CD8-positive, alpha-beta T cell (primary cell): ENCODE measurements at regions of chr12 and their contacts with region 1.

Region 1: GRCh38 chr12:132687208-132688164 is at the starts of genes POLE and PXMP2:
- DNase-seq: peak; percentile 88 to 98 (median 94)
- ATAC-seq: peak; percentile 95
- H3K4me3 ChIP-seq: peak within 1 kb of the TSS; percentile 38 to 58
- H3K4me3 Mint-ChIP-seq: peak within 1 kb of the TSS; percentile 82
- H3K27ac ChIP-seq: peak within 1 kb of the TSS in 1 of 2 experiments; percentile 27
- H3K27ac Mint-ChIP-seq: peak within 1 kb of the TSS; percentile 55
- H3K4me1 ChIP-seq: peaks cover 7% of the 10 kb centered on the region
- H3K4me1 Mint-ChIP-seq: peaks cover 14% of the 10 kb centered on the region
- H3K27me3 ChIP-seq: no peaks in the 10 kb centered on the region
- H3K27me3 Mint-ChIP-seq: no peaks in the 10 kb centered on the region
- CTCF ChIP-seq: no peak
- total RNA-seq, gene POLE: 25.9 to 31.1 TPM
- total RNA-seq, gene PXMP2: 1.2 to 1.8 TPM

Region 2: GRCh38 chr12:131894313-131894860 is 793.1 kb before region 1 on chr12 and contains the start of gene ULK1:
- CTCF ChIA-PET with region 1: no interaction called
- POLR2A ChIA-PET with region 1: no interaction called
- intact Hi-C with region 1: loop called in 1 of 2 experiments (anchors 5 kb)
- DNase-seq: peak; percentile 82 to 96 (median 92)
- ATAC-seq: peak; percentile 85
- H3K4me3 ChIP-seq: peak within 1 kb of the TSS; percentile 55 to 77
- H3K4me3 Mint-ChIP-seq: peak within 1 kb of the TSS; percentile 90
- H3K27ac ChIP-seq: peak within 1 kb of the TSS in 1 of 2 experiments; percentile 43
- H3K27ac Mint-ChIP-seq: peak within 1 kb of the TSS; percentile 79
- H3K4me1 ChIP-seq: peaks cover 16% of the 10 kb centered on the region
- H3K4me1 Mint-ChIP-seq: peaks cover 18% of the 10 kb centered on the region
- H3K27me3 ChIP-seq: no peaks in the 10 kb centered on the region
- H3K27me3 Mint-ChIP-seq: no peaks in the 10 kb centered on the region
- CTCF ChIP-seq: no peak
- total RNA-seq, gene ULK1: 76.6 to 79.9 TPM

Region 3: DNA sequence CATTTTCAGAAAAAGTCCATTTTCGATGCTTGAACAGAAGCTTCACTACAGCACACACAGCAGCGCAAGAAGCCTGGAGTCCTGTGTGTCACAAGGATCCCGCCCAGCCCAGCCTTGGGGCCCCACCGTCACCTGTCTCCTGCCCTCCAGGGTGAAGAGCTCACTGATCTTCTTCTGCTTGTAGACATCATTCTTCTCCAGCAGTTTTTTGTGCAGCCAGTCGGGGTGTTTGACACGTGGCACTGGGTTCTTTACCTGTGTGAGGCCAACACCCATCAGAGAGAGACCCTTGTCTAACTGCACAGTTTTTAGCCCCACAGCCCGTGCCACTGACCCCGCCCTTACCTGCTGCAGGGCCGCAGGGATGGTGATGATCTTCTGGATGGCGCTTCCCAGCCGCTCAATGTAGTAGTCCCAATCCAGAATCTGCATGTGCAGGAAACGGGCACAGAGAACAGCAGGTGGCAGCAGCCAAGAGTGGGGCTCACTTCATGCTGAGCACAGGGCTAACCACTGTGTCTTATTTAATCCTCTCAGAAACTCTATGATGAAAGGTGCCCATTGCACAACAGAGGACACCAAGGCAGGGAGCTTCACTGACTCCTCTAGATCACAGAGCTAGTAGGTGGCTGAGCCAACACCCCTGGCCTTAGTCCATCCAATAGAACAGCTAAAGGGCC is 30.3 kb before region 1 on chr12:
- CTCF ChIA-PET with region 1: no interaction called
- POLR2A ChIA-PET with region 1: no interaction called
- intact Hi-C with region 1: no loop called
- DNase-seq: no peak
- ATAC-seq: no peak
- H3K4me3 ChIP-seq: no peak overlapping the region
- H3K4me3 Mint-ChIP-seq: no peak overlapping the region
- H3K27ac ChIP-seq: no peak overlapping the region
- H3K27ac Mint-ChIP-seq: no peak overlapping the region
- H3K4me1 ChIP-seq: no peaks in the 10 kb centered on the region
- H3K4me1 Mint-ChIP-seq: peaks cover 6% of the 10 kb centered on the region
- H3K27me3 ChIP-seq: no peaks in the 10 kb centered on the region
- H3K27me3 Mint-ChIP-seq: no peaks in the 10 kb centered on the region
- CTCF ChIP-seq: no peak

Region 4: DNA sequence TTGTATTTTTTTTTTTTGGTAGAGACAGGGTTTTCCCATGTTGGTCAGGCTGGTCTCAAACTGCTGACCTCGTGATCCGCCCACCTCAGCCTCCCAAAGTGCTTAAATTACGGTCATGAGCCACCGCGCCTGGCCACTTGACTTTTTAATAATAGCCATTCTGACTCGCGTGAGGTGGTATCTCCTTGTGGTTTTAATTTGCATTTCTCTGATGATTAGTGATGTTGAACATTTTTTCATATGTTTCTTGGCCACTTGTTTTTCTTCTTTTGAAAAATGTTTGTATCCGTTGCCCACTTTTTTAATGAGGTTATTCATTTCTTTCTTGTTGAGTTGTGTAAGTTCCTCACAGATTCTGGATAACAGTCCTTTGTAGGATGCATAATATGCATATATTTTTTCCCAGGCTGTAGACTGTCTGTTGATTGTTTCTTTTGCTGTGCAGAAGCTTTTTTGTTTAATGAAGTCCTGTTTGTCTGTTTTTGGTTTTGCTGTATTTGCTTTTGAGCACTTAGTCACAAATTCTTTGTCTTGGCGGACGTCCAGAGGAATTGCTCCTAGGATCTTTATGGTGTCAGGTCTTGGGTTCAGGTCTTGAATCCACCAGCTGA is 12.8 kb after region 1 on chr12:
- CTCF ChIA-PET with region 1: no interaction called
- POLR2A ChIA-PET with region 1: no interaction called
- intact Hi-C with region 1: no loop called
- DNase-seq: no peak
- ATAC-seq: no peak
- H3K4me3 ChIP-seq: no peak overlapping the region
- H3K4me3 Mint-ChIP-seq: no peak overlapping the region
- H3K27ac ChIP-seq: no peak overlapping the region
- H3K27ac Mint-ChIP-seq: no peak overlapping the region
- H3K4me1 ChIP-seq: no peaks in the 10 kb centered on the region
- H3K4me1 Mint-ChIP-seq: no peaks in the 10 kb centered on the region
- H3K27me3 ChIP-seq: no peaks in the 10 kb centered on the region
- H3K27me3 Mint-ChIP-seq: no peaks in the 10 kb centered on the region
- CTCF ChIP-seq: no peak

Region 5: DNA sequence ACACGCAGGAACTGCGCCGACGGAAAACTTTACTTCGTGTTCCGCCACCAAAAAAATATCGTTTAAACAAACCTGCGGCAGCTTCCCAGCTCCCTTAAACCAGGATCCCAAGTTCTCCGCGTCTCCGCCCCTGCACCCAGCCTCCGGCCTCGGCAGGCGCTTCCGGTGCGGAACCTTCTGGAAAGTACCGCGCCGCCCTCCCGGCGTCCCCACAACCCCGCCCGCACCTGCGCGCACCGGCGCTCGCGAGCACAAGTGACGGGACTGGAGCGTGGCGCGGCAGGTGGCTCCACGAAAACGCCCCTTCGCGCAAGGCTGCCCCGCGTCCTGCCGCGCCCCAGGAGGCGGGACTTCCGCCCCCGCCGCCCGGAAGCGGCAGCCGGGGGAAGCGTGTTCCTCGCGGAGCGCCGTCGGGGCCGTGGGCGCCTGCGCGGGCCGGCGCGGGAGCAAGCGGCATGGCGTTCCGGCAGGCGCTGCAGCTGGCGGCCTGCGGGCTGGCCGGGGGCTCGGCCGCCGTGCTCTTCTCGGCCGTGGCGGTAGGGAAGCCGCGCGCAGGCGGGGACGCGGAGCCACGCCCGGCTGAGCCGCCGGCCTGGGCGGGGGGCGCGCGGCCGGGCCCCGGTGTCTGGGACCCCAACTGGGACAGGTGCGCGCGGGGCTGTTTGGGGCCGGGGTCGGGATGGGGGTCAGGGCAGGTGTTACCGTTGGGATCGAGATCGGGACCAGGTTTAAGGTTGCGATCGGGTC is 23.1 kb after region 1 on chr12 and contains the start of gene PGAM5:
- CTCF ChIA-PET with region 1: no interaction called
- POLR2A ChIA-PET with region 1: no interaction called
- intact Hi-C with region 1: loop called (anchors 1 kb)
- DNase-seq: peak; percentile 81 to 98 (median 90)
- ATAC-seq: peak; percentile 97
- H3K4me3 ChIP-seq: peak within 1 kb of the TSS; percentile 68 to 69
- H3K4me3 Mint-ChIP-seq: peak within 1 kb of the TSS; percentile 87
- H3K27ac ChIP-seq: peak within 1 kb of the TSS; percentile 75 to 86
- H3K27ac Mint-ChIP-seq: peak within 1 kb of the TSS; percentile 94
- H3K4me1 ChIP-seq: peaks cover 21% of the 10 kb centered on the region
- H3K4me1 Mint-ChIP-seq: peaks cover 21% of the 10 kb centered on the region
- H3K27me3 ChIP-seq: no peaks in the 10 kb centered on the region
- H3K27me3 Mint-ChIP-seq: no peaks in the 10 kb centered on the region
- CTCF ChIP-seq: no peak
- total RNA-seq, gene PGAM5: 14.7 to 15.7 TPM

Region 6: DNA sequence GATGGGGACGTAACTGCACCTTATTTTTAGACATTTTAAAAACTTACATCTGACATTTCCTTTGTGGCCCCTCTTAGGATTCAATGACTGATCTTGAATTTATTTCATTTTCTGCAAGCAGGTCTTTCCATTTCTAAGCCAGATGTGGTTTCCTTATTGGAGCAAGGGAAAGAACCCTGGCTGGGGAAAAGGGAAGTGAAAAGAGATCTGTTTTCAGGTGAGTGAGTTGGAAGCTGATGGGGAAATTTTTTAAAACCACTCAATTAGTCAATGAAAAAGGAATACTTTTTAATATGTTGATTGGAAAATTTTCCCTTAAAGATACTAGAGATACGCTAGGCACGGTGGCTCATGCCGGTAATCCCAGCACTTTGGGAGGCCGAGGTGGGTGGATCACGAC is 395.9 kb after region 1 on chr12:
- CTCF ChIA-PET with region 1: no interaction called
- POLR2A ChIA-PET with region 1: no interaction called
- intact Hi-C with region 1: no loop called
- DNase-seq: no peak
- ATAC-seq: no peak
- H3K4me3 ChIP-seq: no peak overlapping the region
- H3K4me3 Mint-ChIP-seq: no peak overlapping the region
- H3K27ac ChIP-seq: no peak overlapping the region
- H3K27ac Mint-ChIP-seq: no peak overlapping the region
- H3K4me1 ChIP-seq: peaks cover 15% of the 10 kb centered on the region
- H3K4me1 Mint-ChIP-seq: peaks cover 17% of the 10 kb centered on the region
- H3K27me3 ChIP-seq: no peaks in the 10 kb centered on the region
- H3K27me3 Mint-ChIP-seq: no peaks in the 10 kb centered on the region
- CTCF ChIP-seq: no peak